Activated naive CD8-positive, alpha-beta T cell treated with anti-CD3 and anti-CD28 coated beads, Interleukin-2, amount 10 ng/mL, durations not matched to agents 7 days and 5 days (primary cell): ENCODE measurements at regions of chr16 and their contacts with region 1.

Region 1: GRCh38 chr16:2009789-2010510 is at the start of gene ZNF598:
- DNase-seq: peak; percentile 91
- ATAC-seq: peak; percentile 86
- H3K4me3 Mint-ChIP-seq: peak within 1 kb of the TSS; percentile 93
- H3K27ac Mint-ChIP-seq: peak within 1 kb of the TSS; percentile 92
- H3K4me1 Mint-ChIP-seq: peaks cover 25% of the 10 kb centered on the region
- H3K27me3 Mint-ChIP-seq: no peaks in the 10 kb centered on the region
- total RNA-seq, gene ZNF598: 67.8 to 77.1 TPM

Region 2: GRCh38 chr16:2023098-2023925 is 13.4 kb after region 1 on chr16:
- POLR2A ChIA-PET with region 1: interaction called, 10 read pairs
- DNase-seq: peak; percentile 99
- ATAC-seq: peak; percentile 62
- H3K4me3 Mint-ChIP-seq: peak overlapping the region; percentile 80
- H3K27ac Mint-ChIP-seq: peak overlapping the region; percentile 78
- H3K4me1 Mint-ChIP-seq: peaks cover 16% of the 10 kb centered on the region
- H3K27me3 Mint-ChIP-seq: peaks cover 37% of the 10 kb centered on the region

Region 3: GRCh38 chr16:2047330-2048115 is 37.6 kb after region 1 on chr16 and contains the starts of genes NTHL1 and TSC2:
- POLR2A ChIA-PET with region 1: interaction called, 12 read pairs
- DNase-seq: peak; percentile 95
- ATAC-seq: peak; percentile 89
- H3K4me3 Mint-ChIP-seq: peak within 1 kb of the TSS; percentile 94
- H3K27ac Mint-ChIP-seq: peak within 1 kb of the TSS; percentile 80
- H3K4me1 Mint-ChIP-seq: peaks cover 13% of the 10 kb centered on the region
- H3K27me3 Mint-ChIP-seq: no peaks in the 10 kb centered on the region
- total RNA-seq, gene NTHL1: 19.4 to 20.7 TPM
- total RNA-seq, gene TSC2: 113 to 125 TPM

Region 4: DNA sequence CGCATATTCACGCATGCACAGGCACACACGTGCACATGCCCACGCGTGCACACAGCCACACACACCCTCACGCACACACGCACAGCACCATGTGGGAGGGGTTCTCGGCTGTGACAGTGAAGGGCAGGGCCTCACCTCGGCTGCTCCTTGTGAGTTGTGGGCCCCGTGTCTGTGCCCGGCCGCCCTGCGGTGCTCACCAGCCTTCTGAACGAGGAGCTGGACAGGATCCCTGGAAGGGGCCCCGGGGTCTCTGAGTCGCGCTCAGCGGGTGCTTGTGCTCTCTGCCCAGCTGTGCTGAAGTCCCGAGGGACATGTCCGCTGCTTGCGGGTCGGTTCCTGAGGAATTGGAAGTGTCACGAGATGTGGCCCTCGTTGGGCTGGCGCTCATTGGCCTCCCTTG is 53.9 kb after region 1 on chr16:
- POLR2A ChIA-PET with region 1: no interaction called
- DNase-seq: no peak
- ATAC-seq: no peak
- H3K4me3 Mint-ChIP-seq: no peak overlapping the region
- H3K27ac Mint-ChIP-seq: no peak overlapping the region
- H3K4me1 Mint-ChIP-seq: no peaks in the 10 kb centered on the region
- H3K27me3 Mint-ChIP-seq: no peaks in the 10 kb centered on the region